Activated CD4-positive, alpha-beta memory T cell treated with anti-CD3 and anti-CD28 coated beads for 36 hours (primary cell): ENCODE measurements at regions of chr6 and their contacts with region 1.

Region 1: GRCh38 chr6:155418017-155418761 is 37.5 kb downstream of the NOX3 start:
- DNase-seq: peak; percentile 87
- H3K4me3 Mint-ChIP-seq: peak overlapping the region; percentile 38
- H3K27ac Mint-ChIP-seq: peak overlapping the region; percentile 98
- H3K4me1 Mint-ChIP-seq: peaks cover 55% of the 10 kb centered on the region
- H3K27me3 Mint-ChIP-seq: no peaks in the 10 kb centered on the region

Region 2: DNA sequence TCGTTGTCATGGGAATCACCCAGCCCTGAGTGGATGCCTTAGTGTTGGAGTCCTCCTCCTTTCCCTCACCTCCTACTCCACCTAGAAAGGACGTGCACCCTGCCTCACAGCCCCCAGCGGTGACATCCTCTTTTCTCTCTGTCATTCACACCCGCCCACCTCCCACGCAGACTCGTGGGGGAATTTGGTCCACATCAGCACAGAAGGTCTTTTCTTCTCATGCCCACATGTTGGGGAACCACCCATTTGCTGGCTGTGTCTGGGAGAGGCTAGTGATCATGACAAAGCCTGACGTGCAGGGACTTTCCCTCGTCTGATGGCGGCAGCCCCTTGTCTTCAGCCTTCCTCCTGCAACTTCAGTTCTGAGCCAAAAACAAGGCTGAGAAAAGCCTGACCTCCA is 811.7 kb before region 1 on chr6:
- CTCF ChIA-PET with region 1: no interaction called
- POLR2A ChIA-PET with region 1: no interaction called
- intact Hi-C with region 1: loop called (anchors 1 kb)
- DNase-seq: peak; percentile 96
- H3K4me3 Mint-ChIP-seq: peak overlapping the region; percentile 24
- H3K27ac Mint-ChIP-seq: peak overlapping the region; percentile 67
- H3K4me1 Mint-ChIP-seq: peaks cover 43% of the 10 kb centered on the region
- H3K27me3 Mint-ChIP-seq: peaks cover 4% of the 10 kb centered on the region

Region 3: DNA sequence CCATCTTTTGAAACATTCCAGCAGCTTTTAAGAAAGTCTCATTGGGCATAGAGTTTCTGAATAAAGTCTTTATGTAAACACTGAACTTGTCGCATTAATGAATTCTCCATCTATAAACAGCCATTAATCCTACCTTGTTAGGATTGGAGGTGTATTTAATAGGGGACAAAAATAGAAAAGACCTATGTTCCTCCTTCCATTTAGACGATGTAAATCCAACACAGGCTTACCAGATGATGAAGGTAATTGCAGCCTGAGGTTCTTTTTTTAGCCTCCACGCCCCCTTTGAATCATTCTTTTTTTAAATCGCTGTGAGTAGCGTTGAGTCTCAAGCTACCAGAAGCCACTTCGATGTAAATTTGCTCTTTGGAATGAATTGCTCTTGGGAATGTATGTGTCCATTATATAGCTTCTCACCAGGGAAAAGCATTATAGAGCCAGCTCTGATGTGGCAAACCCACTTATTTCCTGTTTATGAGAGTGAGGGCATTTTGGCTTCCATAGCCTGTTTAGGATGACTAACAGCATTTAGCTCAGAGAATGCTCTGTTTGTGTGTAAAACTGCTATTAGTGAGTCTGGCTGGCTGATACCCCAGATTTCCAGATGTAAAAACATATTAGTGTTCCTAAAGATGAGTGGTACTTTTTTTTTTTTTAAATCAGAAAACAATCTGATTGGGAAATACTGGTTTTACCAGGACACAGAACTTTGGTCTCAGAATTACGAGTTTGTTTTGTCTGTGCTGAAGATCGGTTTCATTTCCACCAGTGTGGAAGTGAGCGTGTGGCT is 229.3 kb before region 1 on chr6:
- CTCF ChIA-PET with region 1: no interaction called
- POLR2A ChIA-PET with region 1: no interaction called
- intact Hi-C with region 1: loop called (anchors 1 kb)
- DNase-seq: no peak
- H3K4me3 Mint-ChIP-seq: peak overlapping the region; percentile 37
- H3K27ac Mint-ChIP-seq: peak overlapping the region; percentile 57
- H3K4me1 Mint-ChIP-seq: peaks cover 41% of the 10 kb centered on the region
- H3K27me3 Mint-ChIP-seq: no peaks in the 10 kb centered on the region

Region 4: DNA sequence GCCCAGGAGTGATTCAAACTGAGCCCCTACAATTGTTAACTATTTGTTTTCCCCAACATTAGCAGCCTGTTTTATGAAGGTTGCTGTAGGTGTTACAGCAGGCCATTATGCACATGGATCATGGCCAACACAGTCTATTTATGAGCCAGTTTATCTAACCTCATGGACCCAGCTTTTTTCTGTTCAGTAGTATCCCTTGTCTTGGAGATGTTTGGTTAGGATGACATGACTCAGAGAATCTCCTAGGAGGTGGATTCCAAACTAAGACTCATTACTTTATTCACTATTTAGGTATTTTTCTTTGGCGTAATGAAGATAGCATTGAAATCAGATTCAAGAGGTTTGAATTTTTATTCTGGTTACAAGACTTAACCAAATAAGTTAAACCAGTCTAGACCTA is 41.1 kb before region 1 on chr6:
- CTCF ChIA-PET with region 1: no interaction called
- POLR2A ChIA-PET with region 1: no interaction called
- intact Hi-C with region 1: no loop called
- DNase-seq: no peak
- H3K4me3 Mint-ChIP-seq: no peak overlapping the region
- H3K27ac Mint-ChIP-seq: no peak overlapping the region
- H3K4me1 Mint-ChIP-seq: peaks cover 4% of the 10 kb centered on the region
- H3K27me3 Mint-ChIP-seq: no peaks in the 10 kb centered on the region

Region 5: GRCh38 chr6:155444952-155445903 is 27.0 kb after region 1 on chr6:
- CTCF ChIA-PET with region 1: interaction called, 4 read pairs
- POLR2A ChIA-PET with region 1: no interaction called
- intact Hi-C with region 1: loop called (anchors 1 kb)
- DNase-seq: peak; percentile 55
- H3K4me3 Mint-ChIP-seq: no peak overlapping the region
- H3K27ac Mint-ChIP-seq: peak overlapping the region; percentile 2
- H3K4me1 Mint-ChIP-seq: peaks cover 16% of the 10 kb centered on the region
- H3K27me3 Mint-ChIP-seq: peaks cover 8% of the 10 kb centered on the region

Region 6: DNA sequence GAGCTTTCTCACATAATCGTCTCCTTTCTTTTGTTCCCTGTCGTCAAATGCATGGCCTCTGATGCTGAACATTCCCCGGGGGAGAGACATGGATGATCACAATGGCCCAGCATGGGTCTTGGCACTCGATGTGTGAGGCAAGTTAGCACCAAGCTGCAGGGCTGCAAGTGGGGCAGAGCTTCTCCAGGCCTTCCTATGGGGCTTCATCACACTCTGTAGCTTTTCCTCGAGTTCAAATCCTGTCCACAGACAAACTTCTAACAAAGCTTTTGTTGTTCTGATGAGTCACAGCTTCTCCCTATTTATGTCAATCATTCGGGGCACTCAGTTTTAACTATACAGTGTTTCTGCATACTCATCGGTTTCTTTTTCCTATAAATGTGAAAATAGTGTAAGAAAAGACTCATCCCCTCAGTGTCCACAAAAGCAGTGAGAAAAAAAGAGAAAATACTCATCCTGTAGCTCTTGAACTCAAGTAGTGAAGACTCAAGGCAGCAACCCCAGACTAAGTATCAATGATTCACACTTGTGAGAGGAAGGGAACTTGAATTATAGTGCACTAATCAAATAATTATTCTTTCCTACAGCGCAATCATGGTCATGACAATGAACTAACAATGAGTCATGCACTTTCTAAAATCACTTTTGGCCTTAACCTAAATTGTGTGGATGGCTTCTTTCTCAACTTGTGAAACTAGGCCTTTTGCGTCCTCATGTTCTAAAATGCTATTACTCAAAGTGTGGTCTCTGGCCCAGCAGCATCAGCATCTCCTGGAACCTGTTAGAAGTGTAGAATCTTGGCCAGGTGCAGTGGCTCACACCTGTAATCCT is 105.8 kb after region 1 on chr6:
- CTCF ChIA-PET with region 1: interaction called, 4 read pairs
- POLR2A ChIA-PET with region 1: interaction called, 12 read pairs
- intact Hi-C with region 1: loop called (anchors 1 kb)
- DNase-seq: peak; percentile 55
- H3K4me3 Mint-ChIP-seq: no peak overlapping the region
- H3K27ac Mint-ChIP-seq: peak overlapping the region; percentile 90
- H3K4me1 Mint-ChIP-seq: peaks cover 34% of the 10 kb centered on the region
- H3K27me3 Mint-ChIP-seq: peaks cover 1% of the 10 kb centered on the region

Region 7: GRCh38 chr6:156776840-156777576 is 1358.8 kb after region 1 on chr6 and contains the start of gene ARID1B:
- CTCF ChIA-PET with region 1: no interaction called
- POLR2A ChIA-PET with region 1: no interaction called
- intact Hi-C with region 1: loop called (anchors 2 kb)
- DNase-seq: peak; percentile 79
- H3K4me3 Mint-ChIP-seq: peak within 1 kb of the TSS; percentile 83
- H3K27ac Mint-ChIP-seq: peak within 1 kb of the TSS; percentile 95
- H3K4me1 Mint-ChIP-seq: peaks cover 20% of the 10 kb centered on the region
- H3K27me3 Mint-ChIP-seq: no peaks in the 10 kb centered on the region
- total RNA-seq, gene ARID1B: 39.0 to 41.5 TPM